ENCODE measurements at regions of chr6 and their contacts with region 1.

Region 1: GRCh38 chr6:31351401-31352309 is 5.3 kb downstream of the HLA-B start:
- DNase-seq: no peak
- CTCF ChIP-seq: no peak

Region 2: DNA sequence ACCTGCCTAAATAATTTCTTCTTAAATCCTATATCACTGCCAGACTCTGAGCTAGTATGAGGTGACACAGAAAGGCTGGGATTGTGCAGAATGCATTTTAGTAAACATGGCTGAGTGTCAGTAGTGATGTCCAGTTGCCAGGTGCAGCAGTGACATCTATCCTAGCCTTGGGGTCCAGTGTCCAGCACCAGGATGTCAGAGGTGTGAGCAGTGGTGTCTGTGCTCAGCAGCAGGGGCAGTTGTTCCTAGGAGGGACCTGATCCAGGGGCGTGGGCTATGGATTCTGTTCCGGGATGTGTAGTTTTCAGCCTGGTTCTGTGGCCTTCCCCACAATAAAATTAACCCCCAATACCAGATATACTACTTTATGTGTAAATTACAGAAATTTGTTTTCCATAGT is 85.7 kb before region 1 on chr6:
- CTCF ChIA-PET with region 1: no interaction called
- POLR2A ChIA-PET with region 1: interaction called, 20 read pairs
- DNase-seq: no peak
- CTCF ChIP-seq: no peak

Region 3: DNA sequence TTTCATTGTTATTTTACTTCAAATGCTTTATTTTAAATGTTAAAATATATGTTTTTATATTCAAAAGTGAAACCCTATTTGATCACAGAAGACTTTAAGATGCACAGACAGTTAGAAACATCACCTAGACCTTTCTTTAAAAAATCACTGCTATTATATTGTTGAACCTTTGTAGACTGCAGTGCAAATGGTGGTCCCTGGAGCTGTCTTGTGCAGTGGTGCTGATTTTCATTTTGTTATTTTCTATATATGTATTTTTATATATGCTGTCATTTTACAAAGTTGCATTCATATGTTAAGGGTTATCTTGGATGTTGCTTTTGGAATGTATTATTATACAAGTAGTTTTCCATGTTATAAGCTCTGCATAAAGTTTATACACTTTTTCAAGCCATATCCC is 24.0 kb after region 1 on chr6:
- CTCF ChIA-PET with region 1: no interaction called
- POLR2A ChIA-PET with region 1: no interaction called
- DNase-seq: no peak
- CTCF ChIP-seq: no peak

Measured in GM10248 (cell line).